T-cell (primary cell): ENCODE measurements at regions of chr9 and their contacts with region 1.

Region 1: GRCh38 chr9:33939924-33940874 is 108.5 kb downstream of the UBAP2 start:
- DNase-seq: no peak
- ATAC-seq: no peak
- H3K4me3 ChIP-seq: no peak overlapping the region
- H3K4me3 Mint-ChIP-seq: no peak overlapping the region
- H3K27ac ChIP-seq: no peak overlapping the region
- H3K27ac Mint-ChIP-seq: no peak overlapping the region
- H3K4me1 ChIP-seq: no peaks in the 10 kb centered on the region
- H3K4me1 Mint-ChIP-seq: no peaks in the 10 kb centered on the region
- H3K27me3 ChIP-seq: no peaks in the 10 kb centered on the region
- H3K27me3 Mint-ChIP-seq: no peaks in the 10 kb centered on the region

Region 2: DNA sequence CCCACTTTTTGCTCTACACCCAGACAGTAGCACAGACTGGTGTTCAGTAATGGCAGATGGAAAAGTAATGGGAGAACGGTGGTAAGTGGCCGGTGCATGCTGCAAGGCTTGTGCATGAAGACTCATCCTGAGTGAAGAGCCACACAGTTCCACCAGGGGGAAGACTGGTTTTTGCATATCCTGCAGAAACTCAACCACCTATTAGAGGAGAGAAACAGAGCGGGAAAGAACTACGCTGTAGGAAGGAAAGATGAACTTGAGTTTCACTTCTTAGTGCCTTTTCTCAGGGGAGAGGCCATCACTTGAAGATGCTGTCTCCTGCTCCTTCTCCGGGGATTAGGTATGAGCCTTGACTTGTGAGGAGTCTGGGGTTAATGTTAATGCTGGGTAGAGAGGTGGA is 154.3 kb before region 1 on chr9:
- CTCF ChIA-PET with region 1: interaction called in 1 of 2 experiments, 10 read pairs
- POLR2A ChIA-PET with region 1: no interaction called
- DNase-seq: no peak
- ATAC-seq: no peak
- H3K4me3 ChIP-seq: no peak overlapping the region
- H3K4me3 Mint-ChIP-seq: no peak overlapping the region
- H3K27ac ChIP-seq: no peak overlapping the region
- H3K27ac Mint-ChIP-seq: no peak overlapping the region
- H3K4me1 ChIP-seq: no peaks in the 10 kb centered on the region
- H3K4me1 Mint-ChIP-seq: no peaks in the 10 kb centered on the region
- H3K27me3 ChIP-seq: no peaks in the 10 kb centered on the region
- H3K27me3 Mint-ChIP-seq: peaks cover 4 to 18% of the 10 kb centered on the region in 2 donors

Region 3: GRCh38 chr9:33976414-33976813 is 36.2 kb after region 1 on chr9:
- CTCF ChIA-PET with region 1: no interaction called
- POLR2A ChIA-PET with region 1: no interaction called
- DNase-seq: no peak
- ATAC-seq: no peak
- H3K4me3 ChIP-seq: no peak overlapping the region
- H3K4me3 Mint-ChIP-seq: no peak overlapping the region
- H3K27ac ChIP-seq: no peak overlapping the region
- H3K27ac Mint-ChIP-seq: no peak overlapping the region
- H3K4me1 ChIP-seq: no peaks in the 10 kb centered on the region
- H3K4me1 Mint-ChIP-seq: no peaks in the 10 kb centered on the region
- H3K27me3 ChIP-seq: no peaks in the 10 kb centered on the region
- H3K27me3 Mint-ChIP-seq: no peaks in the 10 kb centered on the region